ENCODE measurements at regions of chr13 and their contacts with region 1.

Region 1: GRCh38 chr13:24160454-24161009 is at the start of gene SPATA13:
- DNase-seq: peak; percentile 95
- H3K4me3 Mint-ChIP-seq: peak within 1 kb of the TSS; percentile 86
- H3K27ac Mint-ChIP-seq: no peak within 1 kb of the TSS
- H3K4me1 Mint-ChIP-seq: peaks cover 12% of the 10 kb centered on the region
- H3K27me3 Mint-ChIP-seq: peaks cover 8% of the 10 kb centered on the region
- total RNA-seq, gene SPATA13: 56.8 to 57.4 TPM

Region 2: GRCh38 chr13:23921451-23921888 is 239.1 kb before region 1 on chr13:
- CTCF ChIA-PET with region 1: no interaction called
- intact Hi-C with region 1: loop called (anchors 2 kb)
- DNase-seq: peak; percentile 16
- H3K4me3 Mint-ChIP-seq: no peak overlapping the region
- H3K27ac Mint-ChIP-seq: no peak overlapping the region
- H3K4me1 Mint-ChIP-seq: no peaks in the 10 kb centered on the region
- H3K27me3 Mint-ChIP-seq: peaks cover 32% of the 10 kb centered on the region

Region 3: DNA sequence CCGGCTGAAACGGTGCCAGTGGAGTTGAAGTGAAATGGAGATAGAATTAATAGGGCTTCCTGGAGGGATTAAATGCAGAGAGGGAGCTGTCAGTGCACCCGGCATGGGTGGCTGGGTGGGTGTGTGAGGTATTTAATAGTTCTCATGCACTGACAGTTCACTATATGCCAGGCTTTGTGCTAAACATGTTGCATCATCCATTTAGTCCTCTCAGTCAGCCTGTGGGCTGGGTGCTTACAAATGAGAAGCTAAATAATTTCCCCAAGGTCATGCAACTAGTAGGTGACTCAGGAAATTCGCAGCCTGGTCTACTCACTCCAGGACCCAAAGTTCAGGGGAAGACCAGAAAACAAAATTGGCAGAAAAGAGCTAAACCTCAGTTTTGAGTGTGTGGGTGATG is 63.5 kb before region 1 on chr13:
- CTCF ChIA-PET with region 1: interaction called, 11 read pairs
- intact Hi-C with region 1: loop called (anchors 1 kb)
- DNase-seq: peak; percentile 69
- H3K4me3 Mint-ChIP-seq: no peak overlapping the region
- H3K27ac Mint-ChIP-seq: peak overlapping the region; percentile 65
- H3K4me1 Mint-ChIP-seq: peaks cover 17% of the 10 kb centered on the region
- H3K27me3 Mint-ChIP-seq: peaks cover 6% of the 10 kb centered on the region

Region 4: GRCh38 chr13:24122569-24122968 is 38.0 kb before region 1 on chr13:
- CTCF ChIA-PET with region 1: no interaction called
- intact Hi-C with region 1: loop called (anchors 2 kb)
- DNase-seq: no peak
- H3K4me3 Mint-ChIP-seq: no peak overlapping the region
- H3K27ac Mint-ChIP-seq: no peak overlapping the region
- H3K4me1 Mint-ChIP-seq: peaks cover 17% of the 10 kb centered on the region
- H3K27me3 Mint-ChIP-seq: peaks cover 23% of the 10 kb centered on the region

Region 5: DNA sequence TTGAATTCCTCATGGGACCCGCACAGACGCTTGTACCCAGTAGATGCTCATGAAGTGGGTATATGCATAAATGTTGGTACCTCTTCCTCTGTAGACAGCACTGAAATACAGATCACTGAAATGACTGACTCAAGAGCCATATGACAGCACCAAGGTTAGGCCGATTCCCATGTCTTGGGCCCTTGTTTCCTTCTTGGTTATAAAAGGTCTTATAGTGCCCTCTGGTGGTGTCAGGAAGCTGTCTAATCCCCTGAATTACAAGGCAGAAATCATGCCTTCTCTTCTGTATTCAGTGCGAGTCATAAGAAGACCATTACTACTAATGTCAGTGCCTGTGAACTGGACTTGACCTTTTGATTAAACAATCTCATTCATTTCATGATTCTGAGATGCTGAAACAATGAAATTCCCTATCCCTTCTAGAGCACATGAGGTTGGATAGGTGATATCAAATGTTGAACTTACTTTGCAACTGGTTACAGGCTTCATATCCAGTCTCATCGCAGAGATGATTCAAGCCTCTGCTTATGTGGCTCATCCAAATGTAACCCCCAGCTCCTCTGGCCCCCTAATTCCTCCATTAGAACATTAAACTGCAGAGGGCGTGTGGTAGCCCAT is 59.7 kb after region 1 on chr13:
- CTCF ChIA-PET with region 1: interaction called, 4 read pairs
- intact Hi-C with region 1: loop called (anchors 1 kb)
- DNase-seq: peak; percentile 72
- H3K4me3 Mint-ChIP-seq: no peak overlapping the region
- H3K27ac Mint-ChIP-seq: no peak overlapping the region
- H3K4me1 Mint-ChIP-seq: peaks cover 22% of the 10 kb centered on the region
- H3K27me3 Mint-ChIP-seq: no peaks in the 10 kb centered on the region

Region 6: GRCh38 chr13:24228852-24229458 is 68.4 kb after region 1 on chr13:
- CTCF ChIA-PET with region 1: interaction called, 3 read pairs
- intact Hi-C with region 1: loop called (anchors 2 kb)
- DNase-seq: peak; percentile 63
- H3K4me3 Mint-ChIP-seq: no peak overlapping the region
- H3K27ac Mint-ChIP-seq: no peak overlapping the region
- H3K4me1 Mint-ChIP-seq: peaks cover 34% of the 10 kb centered on the region
- H3K27me3 Mint-ChIP-seq: no peaks in the 10 kb centered on the region